Astrocyte of the cerebellum (primary cell): ENCODE measurements at regions of chr10 and their contacts with region 1.

Region 1: DNA sequence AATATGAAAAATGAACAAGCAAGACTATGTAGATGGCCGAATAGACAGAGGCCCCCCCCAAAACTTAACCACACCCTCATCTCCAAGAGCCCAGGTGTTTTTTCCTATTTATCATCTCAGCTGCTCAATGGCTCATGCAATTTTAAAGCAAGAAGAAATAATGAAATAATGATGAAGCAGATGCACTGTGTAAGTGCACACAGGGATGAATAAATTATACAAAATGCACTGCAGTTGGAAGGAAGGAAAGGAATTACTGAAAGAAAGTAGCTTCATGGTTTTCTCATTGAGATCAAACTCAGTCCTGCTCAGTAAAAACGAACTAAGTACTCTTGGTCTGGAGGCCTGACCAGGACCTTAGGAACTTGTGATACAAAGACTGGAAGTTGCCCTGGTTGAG is 810.1 kb downstream of the NRG3 start:
- DNase-seq: no peak
- H3K4me3 ChIP-seq: no peak overlapping the region
- CTCF ChIP-seq: no peak

Region 2: DNA sequence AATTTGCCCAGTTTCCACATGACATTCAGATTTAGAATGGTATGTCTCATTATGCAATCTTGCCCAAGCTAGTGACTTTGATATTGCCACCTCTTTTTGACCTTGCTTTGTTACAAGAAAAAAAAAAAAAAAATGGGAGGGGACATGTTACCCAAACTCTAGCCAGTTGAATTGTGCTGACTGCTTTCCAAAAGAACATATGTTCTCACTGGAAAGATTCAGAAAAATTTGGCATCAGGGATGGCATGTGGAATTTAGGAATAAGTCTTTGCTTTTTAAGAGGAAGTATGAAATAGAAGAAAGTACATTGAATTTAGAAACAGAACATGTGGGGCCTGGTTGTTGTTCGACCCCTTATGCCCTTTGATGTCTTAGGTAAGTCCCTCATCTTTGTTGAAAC is 36.7 kb after region 1 on chr10:
- in situ Hi-C with region 1: loop called (anchors 5 kb)
- DNase-seq: no peak
- H3K4me3 ChIP-seq: no peak overlapping the region
- CTCF ChIP-seq: no peak

Region 3: GRCh38 chr10:83555264-83555663 is 870.2 kb after region 1 on chr10:
- in situ Hi-C with region 1: no loop called
- DNase-seq: no peak
- H3K4me3 ChIP-seq: no peak overlapping the region
- CTCF ChIP-seq: no peak